Activated CD4-positive, alpha-beta T cell treated with anti-CD3 and anti-CD28 coated beads for 36 hours (primary cell): ENCODE measurements at regions of chr5 and their contacts with region 1.

Region 1: DNA sequence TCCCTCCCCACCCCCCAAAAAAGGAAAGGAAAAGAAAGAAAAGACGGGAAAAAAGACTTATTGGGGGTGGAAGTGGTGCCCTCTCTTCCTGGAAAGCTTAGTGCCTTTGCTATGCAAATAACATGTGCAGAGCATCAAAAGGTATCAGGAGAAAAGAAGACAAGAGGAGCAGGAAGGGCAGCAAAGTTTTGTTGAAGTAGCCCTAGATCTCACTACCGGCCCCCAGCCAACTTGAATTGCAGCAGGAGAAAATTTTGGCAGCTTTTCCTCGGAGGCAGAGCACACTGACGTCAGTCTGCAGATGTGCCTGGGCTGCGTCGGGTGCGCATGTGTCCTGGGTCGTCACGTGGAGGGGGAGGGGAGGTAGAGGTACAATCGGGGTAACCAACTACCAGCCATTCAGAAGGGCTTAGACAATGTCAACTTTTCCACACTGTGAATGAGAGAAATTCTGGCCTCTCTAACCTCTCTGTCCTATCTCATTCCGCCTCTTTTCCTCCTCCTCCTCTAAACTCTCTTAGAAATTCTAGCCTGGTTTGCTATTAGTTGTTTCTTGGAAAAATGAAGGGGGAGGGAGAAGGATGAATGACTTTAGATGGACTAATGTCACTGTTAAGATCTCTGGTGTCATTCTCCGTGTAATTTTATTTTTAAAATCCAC is at the start of gene ADAMTS6:
- DNase-seq: peak; percentile 90
- ATAC-seq: peak; percentile 95
- H3K4me3 Mint-ChIP-seq: no peak within 1 kb of the TSS
- H3K27ac Mint-ChIP-seq: peak within 1 kb of the TSS; percentile 91
- H3K4me1 Mint-ChIP-seq: peaks cover 10% of the 10 kb centered on the region
- H3K27me3 Mint-ChIP-seq: no peaks in the 10 kb centered on the region
- total RNA-seq, gene ADAMTS6: 0.96 to 1.3 TPM

Region 2: GRCh38 chr5:64768358-64769312 is 713.1 kb before region 1 on chr5 and contains the starts of genes CWC27 and SREK1IP1:
- CTCF ChIA-PET with region 1: no interaction called
- POLR2A ChIA-PET with region 1: no interaction called
- intact Hi-C with region 1: loop called (anchors 1 to 5 kb)
- DNase-seq: peak; percentile 89
- ATAC-seq: peak; percentile 97
- H3K4me3 Mint-ChIP-seq: peak within 1 kb of the TSS; percentile 91
- H3K27ac Mint-ChIP-seq: peak within 1 kb of the TSS; percentile 95
- H3K4me1 Mint-ChIP-seq: peaks cover 45% of the 10 kb centered on the region
- H3K27me3 Mint-ChIP-seq: no peaks in the 10 kb centered on the region
- total RNA-seq, gene CWC27: 35.4 to 35.8 TPM
- total RNA-seq, gene SREK1IP1: 27.8 TPM

Region 3: DNA sequence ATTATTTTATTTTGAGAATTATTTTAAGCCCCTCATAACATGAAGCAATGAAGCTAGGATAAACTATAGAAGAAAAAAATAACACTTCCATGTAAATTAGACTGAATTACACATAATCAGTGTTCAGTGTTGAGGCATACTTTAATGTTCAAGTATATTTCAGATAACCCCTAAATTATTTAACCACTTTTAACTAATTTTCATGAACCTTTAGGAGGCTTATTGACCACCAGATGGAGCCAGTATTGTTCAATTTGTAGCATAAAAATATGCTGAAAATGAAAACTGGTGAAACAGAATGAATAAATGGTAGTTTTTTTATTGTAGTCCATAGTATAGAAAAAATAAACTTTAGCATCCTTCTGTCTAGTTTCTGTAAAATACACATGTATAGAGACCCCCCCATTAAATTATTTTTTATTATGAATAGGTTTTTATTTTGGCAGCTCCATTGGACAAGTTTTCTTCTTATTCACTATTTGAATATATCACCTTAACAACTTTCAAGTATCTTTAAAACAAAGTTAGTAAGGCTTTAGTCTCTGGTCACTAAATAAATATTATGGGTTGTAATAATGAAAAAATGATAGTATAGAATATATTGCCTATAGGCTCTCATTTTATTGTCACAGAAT is 522.9 kb before region 1 on chr5:
- CTCF ChIA-PET with region 1: interaction called, 5 read pairs
- POLR2A ChIA-PET with region 1: no interaction called
- intact Hi-C with region 1: loop called (anchors 1 to 2 kb)
- DNase-seq: no peak
- ATAC-seq: no peak
- H3K4me3 Mint-ChIP-seq: no peak overlapping the region
- H3K27ac Mint-ChIP-seq: no peak overlapping the region
- H3K4me1 Mint-ChIP-seq: no peaks in the 10 kb centered on the region
- H3K27me3 Mint-ChIP-seq: no peaks in the 10 kb centered on the region

Region 4: GRCh38 chr5:65076251-65076869 is 405.4 kb before region 1 on chr5:
- CTCF ChIA-PET with region 1: interaction called, 6 read pairs
- POLR2A ChIA-PET with region 1: no interaction called
- intact Hi-C with region 1: loop called (anchors 1 kb)
- DNase-seq: peak; percentile 74
- ATAC-seq: peak; percentile 99
- H3K4me3 Mint-ChIP-seq: no peak overlapping the region
- H3K27ac Mint-ChIP-seq: no peak overlapping the region
- H3K4me1 Mint-ChIP-seq: peaks cover 11% of the 10 kb centered on the region
- H3K27me3 Mint-ChIP-seq: peaks cover 8% of the 10 kb centered on the region

Region 5: DNA sequence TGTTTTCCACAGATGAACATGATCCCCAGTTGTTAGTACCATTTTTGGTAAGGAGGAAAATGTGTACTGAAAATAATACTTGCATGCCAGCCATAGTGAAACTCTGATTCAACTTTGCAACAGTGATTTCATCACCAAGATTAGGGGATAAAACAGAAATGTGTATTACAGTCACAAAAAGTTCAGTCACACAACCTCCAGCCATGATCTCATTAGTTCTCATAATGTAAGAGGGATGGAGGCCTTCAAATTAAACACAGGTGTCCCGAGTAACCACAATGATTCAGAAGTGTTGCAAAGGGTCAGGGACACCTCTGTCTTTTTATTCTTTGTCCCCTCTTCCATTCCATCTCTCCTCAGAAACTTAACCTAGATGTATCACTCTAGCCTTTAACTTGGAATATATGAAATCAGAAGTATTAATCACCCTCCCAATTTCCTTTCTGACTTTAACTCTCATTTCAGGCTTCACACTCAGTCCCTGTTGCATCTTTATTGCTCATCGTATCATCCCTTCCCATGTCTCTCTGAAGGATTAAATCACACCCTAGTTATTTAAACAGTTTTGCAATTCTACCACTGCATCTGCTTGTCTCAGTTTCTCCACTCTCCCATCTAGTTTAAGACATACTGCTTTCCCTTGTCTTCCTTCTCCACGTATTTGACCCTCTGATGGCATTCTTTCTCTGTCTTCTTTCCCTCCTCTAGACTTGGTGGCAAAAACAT is 291.3 kb before region 1 on chr5:
- CTCF ChIA-PET with region 1: no interaction called
- POLR2A ChIA-PET with region 1: no interaction called
- intact Hi-C with region 1: loop called (anchors 1 kb)
- DNase-seq: peak; percentile 28
- ATAC-seq: peak; percentile 92
- H3K4me3 Mint-ChIP-seq: no peak overlapping the region
- H3K27ac Mint-ChIP-seq: peak overlapping the region; percentile 52
- H3K4me1 Mint-ChIP-seq: peaks cover 21% of the 10 kb centered on the region
- H3K27me3 Mint-ChIP-seq: peaks cover 8% of the 10 kb centered on the region

Region 6: GRCh38 chr5:65624571-65625555 is 143.1 kb after region 1 on chr5 and contains the starts of genes SHLD3 and TRAPPC13:
- CTCF ChIA-PET with region 1: no interaction called
- POLR2A ChIA-PET with region 1: no interaction called
- intact Hi-C with region 1: loop called in 1 of 2 experiments (anchors 5 kb)
- DNase-seq: peak; percentile 88
- ATAC-seq: peak; percentile 78
- H3K4me3 Mint-ChIP-seq: peak within 1 kb of the TSS; percentile 85
- H3K27ac Mint-ChIP-seq: peak within 1 kb of the TSS; percentile 96
- H3K4me1 Mint-ChIP-seq: peaks cover 44% of the 10 kb centered on the region
- H3K27me3 Mint-ChIP-seq: no peaks in the 10 kb centered on the region
- total RNA-seq, gene SHLD3: 3.5 to 4.0 TPM
- total RNA-seq, gene TRAPPC13: 11.2 to 20.7 TPM